ENCODE measurements at regions of chr9 and their contacts with region 1.

Region 1: GRCh38 chr9:21919377-21920362 is 74.5 kb downstream of the CDKN2A start:
- DNase-seq: peak; percentile 21
- H3K4me3 Mint-ChIP-seq: peak overlapping the region; percentile 59
- H3K27ac Mint-ChIP-seq: peak overlapping the region; percentile 76
- H3K4me1 Mint-ChIP-seq: peaks cover 34% of the 10 kb centered on the region
- H3K27me3 Mint-ChIP-seq: no peaks in the 10 kb centered on the region

Region 2: GRCh38 chr9:21831961-21832509 is 87.6 kb before region 1 on chr9:
- intact Hi-C with region 1: loop called (anchors 2 kb)
- DNase-seq: peak; percentile 66
- H3K4me3 Mint-ChIP-seq: peak overlapping the region; percentile 20
- H3K27ac Mint-ChIP-seq: peak overlapping the region; percentile 73
- H3K4me1 Mint-ChIP-seq: peaks cover 73% of the 10 kb centered on the region
- H3K27me3 Mint-ChIP-seq: no peaks in the 10 kb centered on the region

Measured in activated T-helper 1 cell treated with anti-CD3 and anti-CD28 coated beads, Interleukin-12 subunit alpha, Interleukin-12 subunit beta, Interleukin-2, Interleukin-4 antibody, amounts not matched to agents 30 ng/mL and 10 ng/mL and 1 ng/mL, durations not matched to agents 14 hours and 24 hours and 36 hours (primary cell).